ENCODE measurements at regions of chr11 and their contacts with region 1.

Region 1: GRCh38 chr11:65900125-65900898 is at the start of gene FOSL1:
- DNase-seq: peak; percentile 99
- ATAC-seq: peak; percentile 66
- H3K4me3 ChIP-seq: peak within 1 kb of the TSS; percentile 78
- H3K27ac ChIP-seq: peak within 1 kb of the TSS; percentile 96
- H3K4me1 ChIP-seq: peaks cover 55% of the 10 kb centered on the region
- H3K27me3 ChIP-seq: no peaks in the 10 kb centered on the region
- CTCF ChIP-seq: no peak
- total RNA-seq, gene FOSL1: 656 and 851 TPM in 2 replicates

Region 2: GRCh38 chr11:65588199-65589054 is 311.9 kb before region 1 on chr11:
- CTCF ChIA-PET with region 1: no interaction called
- POLR2A ChIA-PET with region 1: no interaction called
- intact Hi-C with region 1: no loop called
- DNase-seq: peak; percentile 65
- ATAC-seq: peak; percentile 74
- H3K4me3 ChIP-seq: no peak overlapping the region
- H3K27ac ChIP-seq: no peak overlapping the region
- H3K4me1 ChIP-seq: no peaks in the 10 kb centered on the region
- H3K27me3 ChIP-seq: no peaks in the 10 kb centered on the region
- CTCF ChIP-seq: peak; percentile 76

Region 3: GRCh38 chr11:65802841-65803240 is 97.5 kb before region 1 on chr11:
- CTCF ChIA-PET with region 1: no interaction called
- POLR2A ChIA-PET with region 1: no interaction called
- intact Hi-C with region 1: no loop called
- DNase-seq: no peak
- ATAC-seq: no peak
- H3K4me3 ChIP-seq: no peak overlapping the region
- H3K27ac ChIP-seq: no peak overlapping the region
- H3K4me1 ChIP-seq: no peaks in the 10 kb centered on the region
- H3K27me3 ChIP-seq: no peaks in the 10 kb centered on the region
- CTCF ChIP-seq: no peak

Region 4: DNA sequence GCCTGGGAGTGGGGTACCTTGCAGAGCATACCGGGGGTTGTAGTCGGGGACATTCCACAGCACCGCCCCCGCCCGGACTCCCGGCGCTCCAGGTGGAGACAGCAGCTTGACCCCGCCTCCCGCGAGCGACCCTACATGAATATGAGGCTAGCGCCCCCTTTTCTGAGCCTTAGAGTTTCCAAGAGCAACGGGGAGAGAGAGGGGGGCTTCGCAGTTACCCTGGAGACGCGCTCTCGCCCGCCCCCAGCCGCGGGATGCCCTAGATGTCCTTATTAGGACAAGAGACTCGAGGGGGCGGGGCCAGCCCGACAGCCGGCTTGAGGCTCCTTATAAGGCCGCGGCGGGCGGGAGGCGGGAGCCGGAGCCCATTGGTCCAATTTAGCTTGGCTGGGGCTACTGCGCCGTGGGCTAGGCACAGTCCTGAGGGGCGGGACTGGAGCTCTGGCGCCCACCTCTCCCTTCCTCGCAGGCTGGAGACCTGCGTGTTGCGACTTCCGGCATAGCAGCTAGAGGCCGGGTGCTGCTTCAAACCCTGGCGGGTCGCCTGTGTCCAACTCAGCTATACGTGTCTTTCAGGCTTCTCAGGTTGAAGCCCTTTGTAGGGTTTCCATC is 41.0 kb before region 1 on chr11:
- CTCF ChIA-PET with region 1: no interaction called
- POLR2A ChIA-PET with region 1: interaction called, 12 read pairs
- intact Hi-C with region 1: no loop called
- DNase-seq: peak; percentile 99
- ATAC-seq: peak; percentile 63
- H3K4me3 ChIP-seq: peak overlapping the region; percentile 79
- H3K27ac ChIP-seq: peak overlapping the region; percentile 74
- H3K4me1 ChIP-seq: peaks cover 41% of the 10 kb centered on the region
- H3K27me3 ChIP-seq: no peaks in the 10 kb centered on the region
- CTCF ChIP-seq: no peak

Region 5: GRCh38 chr11:65911682-65912568 is 11.6 kb after region 1 on chr11:
- CTCF ChIA-PET with region 1: interaction called, 8 read pairs
- POLR2A ChIA-PET with region 1: interaction called, 31 read pairs
- intact Hi-C with region 1: loop called (anchors 1 kb)
- DNase-seq: peak; percentile 99
- ATAC-seq: peak; percentile 46
- H3K4me3 ChIP-seq: no peak overlapping the region
- H3K27ac ChIP-seq: peak overlapping the region; percentile 93
- H3K4me1 ChIP-seq: peaks cover 82% of the 10 kb centered on the region
- H3K27me3 ChIP-seq: no peaks in the 10 kb centered on the region
- CTCF ChIP-seq: peak; percentile 66

Region 6: DNA sequence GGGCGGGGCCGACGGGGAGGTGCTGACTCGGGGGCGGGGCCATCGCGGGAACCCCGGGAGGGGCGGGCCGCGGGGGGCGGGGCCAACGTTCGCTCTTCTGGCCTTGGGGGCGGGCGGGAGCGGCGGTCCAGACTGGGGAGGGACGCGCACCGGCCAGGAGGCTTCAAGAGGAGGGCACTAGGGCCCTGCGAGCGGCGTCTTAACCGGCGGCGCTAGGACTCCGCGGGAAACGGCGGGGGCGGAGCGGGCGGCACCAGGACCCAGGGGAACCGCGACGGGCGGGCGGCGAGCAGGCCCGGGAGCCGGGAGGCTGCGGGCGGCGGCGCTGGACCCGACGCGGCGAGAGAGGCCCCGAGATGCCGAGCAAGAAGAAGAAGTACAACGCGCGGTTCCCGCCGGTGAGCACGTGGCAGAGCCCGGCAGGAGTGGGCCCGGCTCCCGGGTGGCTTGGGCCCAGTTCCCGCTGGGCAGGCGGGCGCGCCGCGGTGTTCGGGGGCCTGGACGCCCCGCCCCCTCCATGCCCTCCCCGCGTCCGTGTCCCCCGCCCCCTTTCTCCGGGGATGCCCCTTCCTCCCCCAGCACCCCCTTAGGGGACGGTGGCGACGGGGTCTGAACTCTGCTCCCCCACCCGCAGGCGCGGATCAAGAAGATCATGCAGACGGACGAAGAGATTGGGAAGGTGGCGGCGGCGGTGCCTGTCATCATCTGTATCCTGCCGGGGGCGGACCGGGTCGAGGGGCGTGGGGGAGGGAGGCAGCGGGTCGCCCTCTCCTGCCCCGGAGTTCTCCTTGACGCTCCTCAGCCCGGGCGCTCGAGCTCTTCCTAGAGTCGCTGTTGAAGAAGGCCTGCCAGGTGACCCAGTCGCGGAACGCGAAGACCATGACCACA is 19.1 kb after region 1 on chr11 and contains the start of gene DRAP1:
- CTCF ChIA-PET with region 1: interaction called, 3 read pairs
- POLR2A ChIA-PET with region 1: interaction called, 17 read pairs
- intact Hi-C with region 1: no loop called
- DNase-seq: peak; percentile 98
- ATAC-seq: peak; percentile 53
- H3K4me3 ChIP-seq: peak within 1 kb of the TSS; percentile 82
- H3K27ac ChIP-seq: peak within 1 kb of the TSS; percentile 93
- H3K4me1 ChIP-seq: peaks cover 46% of the 10 kb centered on the region
- H3K27me3 ChIP-seq: no peaks in the 10 kb centered on the region
- CTCF ChIP-seq: no peak
- total RNA-seq, gene DRAP1: 944 and 1,531 TPM in 2 replicates

Region 7: DNA sequence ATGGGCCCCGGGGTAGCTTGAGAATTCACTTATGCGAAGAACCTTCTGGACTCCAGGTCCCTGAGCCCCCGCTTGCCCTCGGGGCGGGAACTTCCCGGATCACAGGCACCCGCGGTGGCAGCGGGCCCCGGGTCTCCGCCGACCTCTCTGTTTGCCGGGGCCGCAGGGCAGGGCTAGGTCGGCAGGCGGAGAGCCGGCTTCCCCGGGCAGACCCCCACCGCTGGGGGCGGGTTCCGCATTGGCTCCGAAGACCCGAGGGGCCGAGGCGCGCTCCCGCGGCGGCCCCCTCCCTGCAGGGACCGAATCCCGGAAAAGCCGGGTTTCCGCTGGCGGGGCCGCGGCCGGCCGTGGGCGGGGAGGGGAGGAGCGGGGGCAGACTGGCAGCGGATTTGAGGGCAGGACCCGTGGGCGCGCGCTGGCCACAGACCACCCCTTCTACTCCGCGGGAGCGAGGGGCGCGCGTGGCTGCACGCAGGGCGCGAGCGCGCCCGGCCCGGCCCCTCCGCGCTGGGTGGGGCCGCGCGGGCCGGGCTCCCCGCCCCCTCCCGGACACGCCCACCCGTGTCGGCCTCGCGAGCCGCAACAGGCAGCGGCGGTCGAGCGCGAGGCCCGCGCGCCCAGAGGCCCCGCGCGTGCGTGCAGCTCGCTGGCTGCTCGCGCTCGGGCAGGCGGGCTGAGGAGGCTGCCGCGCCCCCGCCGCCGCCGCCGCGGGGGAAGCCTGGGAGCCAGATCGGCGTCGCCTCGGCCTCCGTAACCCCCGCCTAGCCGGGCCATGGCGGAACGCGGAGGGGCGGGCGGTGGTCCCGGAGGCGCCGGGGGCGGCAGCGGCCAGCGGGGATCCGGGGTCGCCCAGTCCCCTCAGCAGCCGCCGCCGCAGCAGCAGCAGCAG is 169.6 kb after region 1 on chr11 and contains the start of gene PACS1:
- CTCF ChIA-PET with region 1: no interaction called
- POLR2A ChIA-PET with region 1: interaction called, 10 read pairs
- intact Hi-C with region 1: no loop called
- DNase-seq: peak; percentile 81
- ATAC-seq: peak; percentile 73
- H3K4me3 ChIP-seq: peak within 1 kb of the TSS; percentile 83
- H3K27ac ChIP-seq: no peak within 1 kb of the TSS
- H3K4me1 ChIP-seq: peaks cover 25% of the 10 kb centered on the region
- H3K27me3 ChIP-seq: no peaks in the 10 kb centered on the region
- CTCF ChIP-seq: no peak; the same call in 1 of the 2 replicates
- total RNA-seq, gene PACS1: 28.7 and 31.5 TPM in 2 replicates

Measured in PC-3 (cell line).